BJ (cell line): ENCODE measurements at regions of chr19 and their contacts with region 1.

Region 1: DNA sequence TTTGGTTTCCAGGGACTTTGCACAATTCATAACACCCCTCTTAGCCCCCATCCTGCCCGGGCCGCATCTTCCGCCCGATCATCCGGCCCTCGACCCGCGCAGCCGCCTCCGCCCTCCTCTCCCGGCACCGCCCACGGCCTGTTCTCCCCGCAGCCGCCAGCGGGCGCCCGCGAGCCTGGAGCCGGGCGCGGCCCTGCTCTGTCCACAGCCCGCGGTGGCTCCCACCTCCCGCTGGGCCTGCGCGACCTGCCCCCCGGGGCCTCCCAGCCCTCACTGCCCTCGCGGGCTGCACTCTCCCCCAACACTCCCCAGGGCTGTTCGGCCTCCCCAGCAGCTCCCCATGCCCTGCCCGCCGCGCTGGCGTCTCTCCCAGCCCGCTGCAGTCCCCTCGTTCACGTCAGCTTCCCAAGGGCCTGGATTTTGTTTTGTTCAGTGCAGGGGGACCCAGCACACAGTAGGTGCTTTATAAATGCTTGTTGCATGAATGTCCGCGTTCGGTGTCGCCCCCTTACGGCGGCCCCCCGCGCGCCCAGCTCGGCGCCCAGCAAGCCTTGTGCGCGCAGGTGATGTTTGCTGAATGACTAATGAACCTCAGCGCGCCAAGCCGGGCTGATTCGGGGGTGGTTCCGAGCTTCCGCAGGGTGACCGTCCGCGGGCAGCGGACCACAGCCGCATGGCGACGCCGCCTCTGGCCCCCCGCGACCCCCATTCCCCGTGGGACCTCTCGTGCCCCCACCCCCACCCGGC is 4.6 kb upstream of the APC2 start:
- DNase-seq: no peak
- H3K4me3 ChIP-seq: peak overlapping the region; percentile 46
- H3K27me3 ChIP-seq: peaks cover 14% of the 10 kb centered on the region
- CTCF ChIP-seq: peak; percentile 32

Region 2: DNA sequence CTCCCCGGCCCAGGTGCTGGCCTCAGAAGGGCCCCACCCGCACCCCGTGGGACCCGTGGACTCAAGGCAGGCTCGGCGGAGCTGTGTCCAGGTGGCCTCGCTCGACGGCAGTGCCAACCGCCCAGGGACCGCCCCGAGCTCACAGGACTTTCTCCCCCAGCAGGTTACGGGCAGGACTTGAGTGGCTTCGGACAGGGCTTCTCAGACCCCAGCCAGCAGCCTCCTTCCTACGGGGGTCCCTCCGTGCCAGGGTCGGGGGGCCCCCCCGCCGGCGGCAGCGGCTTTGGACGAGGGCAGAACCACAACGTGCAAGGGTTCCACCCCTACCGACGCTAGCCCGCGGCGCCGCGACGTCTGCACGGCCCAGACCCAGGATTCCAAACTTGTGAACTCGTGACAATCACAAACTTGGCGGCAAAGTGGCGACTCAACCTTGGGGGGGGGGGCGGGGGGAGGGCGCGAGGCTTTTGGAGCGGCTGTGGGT is 10.7 kb before region 1 on chr19:
- CTCF ChIA-PET with region 1: interaction called, 11 read pairs
- POLR2A ChIA-PET with region 1: no interaction called
- DNase-seq: no peak
- H3K4me3 ChIP-seq: no peak overlapping the region
- H3K27me3 ChIP-seq: no peaks in the 10 kb centered on the region
- CTCF ChIP-seq: no peak

Region 3: GRCh38 chr19:1465191-1466016 is 20.0 kb after region 1 on chr19:
- CTCF ChIA-PET with region 1: interaction called, 21 read pairs
- POLR2A ChIA-PET with region 1: no interaction called
- DNase-seq: no peak
- H3K4me3 ChIP-seq: no peak overlapping the region
- H3K27me3 ChIP-seq: peaks cover 11% of the 10 kb centered on the region
- CTCF ChIP-seq: peak; percentile 66

Region 4: DNA sequence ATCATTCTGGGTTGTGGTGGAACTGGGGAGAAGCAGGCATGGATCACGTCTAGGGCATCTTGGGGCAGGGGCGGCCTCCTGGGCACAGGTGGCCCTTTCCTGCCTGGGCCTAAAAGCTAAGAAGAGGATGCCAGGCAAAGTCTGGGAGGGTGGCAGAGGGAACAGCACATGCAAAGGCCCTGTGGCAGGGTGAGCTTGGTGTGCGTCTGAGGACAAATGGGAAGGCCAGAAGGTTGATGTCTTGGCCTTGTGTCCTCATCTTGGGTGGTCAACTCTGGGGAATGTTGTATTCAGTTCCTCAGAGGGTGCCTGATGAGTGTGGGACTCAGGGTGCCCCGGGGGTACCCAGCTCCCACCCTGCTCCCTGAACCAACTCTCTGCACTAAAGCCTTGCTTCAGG is 73.1 kb after region 1 on chr19:
- CTCF ChIA-PET with region 1: no interaction called
- POLR2A ChIA-PET with region 1: no interaction called
- DNase-seq: no peak
- H3K4me3 ChIP-seq: no peak overlapping the region
- H3K27me3 ChIP-seq: peaks cover 9% of the 10 kb centered on the region
- CTCF ChIP-seq: no peak